Activated naive CD4-positive, alpha-beta T cell treated with anti-CD3 and anti-CD28 coated beads for 36 hours (primary cell): ENCODE measurements at regions of chr1 and their contacts with region 1.

Region 1: DNA sequence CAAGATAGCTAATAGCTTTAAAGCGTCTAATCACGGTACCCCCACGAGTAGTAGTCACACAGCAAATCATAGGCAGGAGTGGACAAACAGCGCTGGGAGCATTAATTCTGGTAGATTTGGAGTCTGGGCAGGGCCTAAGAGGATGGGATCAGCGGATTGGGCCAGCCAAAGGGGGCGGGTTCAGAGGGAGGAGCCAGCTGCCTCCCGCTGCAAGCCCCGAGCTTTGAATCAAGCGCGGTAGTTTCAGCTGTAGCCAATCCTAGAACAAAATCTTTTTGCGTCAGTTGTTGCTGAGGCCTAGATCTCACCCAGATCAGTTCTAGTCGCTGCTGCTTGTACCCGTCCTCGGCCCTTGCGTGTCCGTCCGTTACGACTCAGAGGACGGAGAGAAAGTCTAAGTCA is 576 bp upstream of the NASP start:
- DNase-seq: peak; percentile 96
- H3K4me3 Mint-ChIP-seq: peak overlapping the region; percentile 95
- H3K27ac Mint-ChIP-seq: peak overlapping the region; percentile 98
- H3K4me1 Mint-ChIP-seq: peaks cover 22% of the 10 kb centered on the region
- H3K27me3 Mint-ChIP-seq: no peaks in the 10 kb centered on the region

Region 2: DNA sequence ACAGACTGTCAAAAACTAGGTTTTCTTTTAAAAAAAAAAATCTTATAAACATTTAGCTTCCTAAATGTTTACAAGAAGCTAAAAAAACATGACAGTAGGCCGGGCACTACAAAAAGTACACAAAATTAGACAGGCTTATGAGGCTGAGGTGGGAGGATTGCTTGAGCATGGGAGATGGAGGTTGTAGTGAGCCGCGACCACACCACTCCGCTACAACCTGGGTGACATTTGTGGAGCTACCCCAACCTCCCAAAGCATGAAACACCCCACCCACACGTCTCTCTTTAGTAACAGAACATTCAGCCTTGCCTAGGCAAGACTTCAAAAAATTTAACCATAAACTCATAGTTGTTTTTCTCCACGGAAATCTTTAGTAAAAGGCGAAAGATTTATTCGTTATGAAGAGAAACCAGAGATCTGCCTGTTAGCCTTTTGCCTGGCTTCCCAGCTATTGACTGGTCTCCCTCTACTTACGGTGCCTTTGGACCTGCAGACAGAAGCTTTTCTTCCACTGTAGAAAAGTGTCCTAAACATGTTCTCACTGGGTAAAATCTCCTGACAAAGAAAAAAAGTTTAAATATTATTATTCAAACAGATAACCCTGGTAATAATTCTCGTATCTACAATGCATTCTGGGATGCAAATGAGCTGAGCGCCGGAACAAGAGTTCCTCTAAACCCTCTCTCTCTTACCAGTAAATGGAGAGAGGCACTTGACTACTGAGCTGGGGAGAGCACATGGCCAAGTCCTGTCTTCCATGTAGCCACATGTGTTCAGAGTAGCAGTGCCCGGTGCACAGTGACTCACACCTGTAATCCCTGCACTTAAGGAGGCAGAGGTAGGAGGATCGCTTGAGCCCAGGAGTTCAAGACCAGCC is 861.5 kb before region 1 on chr1:
- CTCF ChIA-PET with region 1: no interaction called
- intact Hi-C with region 1: loop called (anchors 5 kb)
- DNase-seq: peak; percentile 90
- H3K4me3 Mint-ChIP-seq: peak overlapping the region; percentile 66
- H3K27ac Mint-ChIP-seq: peak overlapping the region; percentile 98
- H3K4me1 Mint-ChIP-seq: peaks cover 83% of the 10 kb centered on the region
- H3K27me3 Mint-ChIP-seq: no peaks in the 10 kb centered on the region

Region 3: DNA sequence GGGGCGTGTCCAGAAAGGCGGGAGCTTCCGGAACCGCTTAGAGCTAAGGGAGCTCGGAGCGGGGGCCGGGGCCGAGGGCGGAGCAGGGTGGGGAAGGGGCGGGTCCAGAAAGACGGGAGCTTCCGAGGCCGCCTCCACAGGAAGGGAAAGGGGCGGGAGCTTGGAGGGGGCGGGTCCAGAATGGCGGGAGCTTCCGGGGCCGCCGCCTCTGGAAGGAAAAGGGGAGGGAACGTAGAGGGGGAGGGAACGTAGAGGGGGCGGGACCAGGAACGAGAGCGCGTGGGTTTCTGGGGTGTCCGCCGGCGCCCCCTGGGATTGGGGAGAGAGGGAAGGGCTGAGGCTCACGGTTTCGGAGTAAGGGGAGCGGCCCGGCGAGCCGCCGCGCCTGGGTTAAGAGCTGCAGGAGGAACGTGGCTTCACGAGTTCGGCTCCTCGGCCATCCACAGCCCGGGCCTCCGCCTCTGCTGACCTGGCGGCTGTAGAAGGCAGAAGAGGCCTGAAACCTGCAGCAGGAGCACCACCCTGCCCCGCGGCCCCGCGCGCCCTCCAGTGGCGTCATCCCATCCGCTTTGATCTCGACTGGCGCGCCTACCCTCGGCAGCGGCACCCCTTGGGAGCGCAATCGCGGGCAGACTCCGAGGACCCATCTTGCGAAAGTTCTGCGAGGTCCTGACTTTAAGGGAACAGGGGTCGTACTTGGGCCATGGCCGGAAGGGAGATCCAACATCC is 279.5 kb before region 1 on chr1:
- CTCF ChIA-PET with region 1: interaction called, 4 read pairs
- intact Hi-C with region 1: loop called (anchors 1 kb)
- DNase-seq: peak; percentile 100
- H3K4me3 Mint-ChIP-seq: peak overlapping the region; percentile 91
- H3K27ac Mint-ChIP-seq: peak overlapping the region; percentile 94
- H3K4me1 Mint-ChIP-seq: peaks cover 33% of the 10 kb centered on the region
- H3K27me3 Mint-ChIP-seq: no peaks in the 10 kb centered on the region

Region 4: DNA sequence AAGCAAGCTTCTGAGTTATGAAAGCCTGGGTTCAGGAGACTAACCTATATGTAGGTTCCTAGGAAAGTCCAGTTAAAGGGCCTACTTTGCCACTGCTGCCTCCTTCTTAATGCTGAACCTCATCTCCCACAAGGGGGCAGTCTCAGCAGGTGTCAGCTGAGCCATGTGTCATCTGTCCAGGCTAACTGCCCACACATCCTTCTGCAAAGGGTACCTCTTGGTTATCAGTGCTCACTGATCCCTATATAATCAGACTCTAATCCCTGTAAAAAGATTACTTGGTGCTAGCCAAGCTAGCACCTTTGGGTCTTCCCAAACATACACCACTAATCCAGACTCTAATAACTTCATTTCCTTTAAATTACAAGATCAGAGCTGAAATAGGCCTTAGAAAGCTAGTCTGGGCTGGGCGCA is 70.6 kb before region 1 on chr1:
- CTCF ChIA-PET with region 1: interaction called, 12 read pairs
- intact Hi-C with region 1: no loop called
- DNase-seq: peak; percentile 77
- H3K4me3 Mint-ChIP-seq: no peak overlapping the region
- H3K27ac Mint-ChIP-seq: no peak overlapping the region
- H3K4me1 Mint-ChIP-seq: peaks cover 14% of the 10 kb centered on the region
- H3K27me3 Mint-ChIP-seq: no peaks in the 10 kb centered on the region

Region 5: GRCh38 chr1:45550401-45551351 is 32.6 kb before region 1 on chr1 and contains the start of gene AKR1A1:
- CTCF ChIA-PET with region 1: interaction called, 4 read pairs
- intact Hi-C with region 1: loop called (anchors 1 kb)
- DNase-seq: peak; percentile 93
- H3K4me3 Mint-ChIP-seq: peak within 1 kb of the TSS; percentile 96
- H3K27ac Mint-ChIP-seq: peak within 1 kb of the TSS; percentile 94
- H3K4me1 Mint-ChIP-seq: peaks cover 19% of the 10 kb centered on the region
- H3K27me3 Mint-ChIP-seq: no peaks in the 10 kb centered on the region
- total RNA-seq, gene AKR1A1: 207 to 217 TPM

Region 6: GRCh38 chr1:45864167-45865106 is 281.2 kb after region 1 on chr1:
- CTCF ChIA-PET with region 1: no interaction called
- intact Hi-C with region 1: loop called (anchors 5 kb)
- DNase-seq: no peak
- H3K4me3 Mint-ChIP-seq: no peak overlapping the region
- H3K27ac Mint-ChIP-seq: no peak overlapping the region
- H3K4me1 Mint-ChIP-seq: peaks cover 43% of the 10 kb centered on the region
- H3K27me3 Mint-ChIP-seq: peaks cover 3% of the 10 kb centered on the region

Region 7: GRCh38 chr1:46247436-46248121 is 664.3 kb after region 1 on chr1 and contains the start of gene RAD54L:
- CTCF ChIA-PET with region 1: no interaction called
- intact Hi-C with region 1: loop called (anchors 2 kb)
- DNase-seq: peak; percentile 99
- H3K4me3 Mint-ChIP-seq: peak within 1 kb of the TSS; percentile 99
- H3K27ac Mint-ChIP-seq: peak within 1 kb of the TSS; percentile 92
- H3K4me1 Mint-ChIP-seq: peaks cover 23% of the 10 kb centered on the region
- H3K27me3 Mint-ChIP-seq: no peaks in the 10 kb centered on the region
- total RNA-seq, gene RAD54L: 83.9 to 88.0 TPM